CD4-positive, alpha-beta T cell (primary cell): ENCODE measurements at regions of chr11 and their contacts with region 1.

Region 1: GRCh38 chr11:117058761-117059261 is 39.4 kb downstream of the SIK3 start:
- DNase-seq: no peak
- ATAC-seq: no peak
- H3K4me3 ChIP-seq: no peak overlapping the region
- H3K4me3 Mint-ChIP-seq: no peak overlapping the region
- H3K27ac ChIP-seq: no peak overlapping the region
- H3K27ac Mint-ChIP-seq: no peak overlapping the region
- H3K4me1 ChIP-seq: peaks cover 12% of the 10 kb centered on the region
- H3K4me1 Mint-ChIP-seq: peaks cover 72% of the 10 kb centered on the region
- H3K27me3 ChIP-seq: no peaks in the 10 kb centered on the region
- H3K27me3 Mint-ChIP-seq: no peaks in the 10 kb centered on the region
- CTCF ChIP-seq: no peak

Region 2: GRCh38 chr11:117045196-117045595 is 13.6 kb before region 1 on chr11:
- CTCF ChIA-PET with region 1: interaction called, 3 read pairs
- POLR2A ChIA-PET with region 1: no interaction called
- intact Hi-C with region 1: loop called in 1 of 2 experiments (anchors 2 kb)
- DNase-seq: no peak
- ATAC-seq: no peak
- H3K4me3 ChIP-seq: no peak overlapping the region
- H3K4me3 Mint-ChIP-seq: no peak overlapping the region
- H3K27ac ChIP-seq: no peak overlapping the region
- H3K27ac Mint-ChIP-seq: no peak overlapping the region
- H3K4me1 ChIP-seq: peaks cover 10% of the 10 kb centered on the region
- H3K4me1 Mint-ChIP-seq: peaks cover 63% of the 10 kb centered on the region
- H3K27me3 ChIP-seq: no peaks in the 10 kb centered on the region
- H3K27me3 Mint-ChIP-seq: no peaks in the 10 kb centered on the region
- CTCF ChIP-seq: no peak

Region 3: DNA sequence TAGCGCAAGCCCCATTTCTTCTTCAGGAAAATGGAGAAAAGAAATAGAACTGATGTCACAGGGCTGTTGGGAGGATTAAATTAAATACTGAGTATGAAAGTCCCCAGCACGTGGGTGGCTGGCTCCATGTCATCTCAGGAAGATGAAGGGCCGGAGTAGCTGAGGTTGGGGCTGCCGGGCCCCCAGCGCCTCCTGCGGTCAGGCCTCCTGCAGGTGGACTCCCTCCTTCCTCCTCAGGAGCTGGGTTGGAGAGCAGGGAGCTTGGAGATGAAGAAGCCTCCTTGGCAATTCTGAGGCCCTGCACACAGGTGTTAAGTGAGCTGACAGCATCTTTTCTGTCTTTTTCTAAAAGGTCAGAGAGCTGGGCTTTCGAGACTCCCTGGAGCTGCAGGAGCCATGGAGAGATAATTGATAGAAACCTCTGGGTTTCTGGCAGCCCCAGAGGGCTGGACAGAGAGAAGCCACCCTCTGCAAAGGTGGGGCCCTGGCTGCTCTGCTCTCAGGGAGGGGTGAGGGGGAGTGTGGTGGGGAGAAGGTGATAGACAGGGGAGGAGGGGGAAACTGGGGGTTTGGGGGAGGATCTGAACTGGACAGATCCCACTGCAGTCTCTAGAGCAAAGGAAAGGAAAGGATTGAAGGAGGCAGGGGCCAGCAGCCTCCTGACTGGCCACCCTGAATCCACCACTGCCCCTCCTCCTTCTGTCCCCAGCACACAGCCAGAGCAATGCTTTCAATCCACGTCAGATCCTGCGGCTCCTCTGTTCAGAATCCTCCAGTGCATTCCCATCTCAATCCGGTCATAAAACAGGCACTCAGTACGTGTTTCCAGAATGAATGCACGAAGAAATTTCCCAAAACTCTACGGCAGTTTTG is 479.7 kb after region 1 on chr11:
- CTCF ChIA-PET with region 1: no interaction called
- POLR2A ChIA-PET with region 1: no interaction called
- intact Hi-C with region 1: no loop called
- DNase-seq: no peak
- ATAC-seq: no peak
- H3K4me3 ChIP-seq: no peak overlapping the region
- H3K4me3 Mint-ChIP-seq: no peak overlapping the region
- H3K27ac ChIP-seq: no peak overlapping the region
- H3K27ac Mint-ChIP-seq: no peak overlapping the region
- H3K4me1 ChIP-seq: no peaks in the 10 kb centered on the region
- H3K4me1 Mint-ChIP-seq: no peaks in the 10 kb centered on the region
- H3K27me3 ChIP-seq: no peaks in the 10 kb centered on the region
- H3K27me3 Mint-ChIP-seq: peaks cover 19% of the 10 kb centered on the region
- CTCF ChIP-seq: no peak